ENCODE measurements at regions of chr14 and their contacts with region 1.

Region 1: GRCh38 chr14:59964251-59965007 is 44.5 kb downstream of the LRRC9 start:
- DNase-seq: no peak
- H3K4me3 Mint-ChIP-seq: peak overlapping the region; percentile 74
- H3K27ac Mint-ChIP-seq: peak overlapping the region; percentile 87
- H3K4me1 Mint-ChIP-seq: peaks cover 12% of the 10 kb centered on the region
- H3K27me3 Mint-ChIP-seq: no peaks in the 10 kb centered on the region

Region 2: GRCh38 chr14:59981564-59981963 is 17.1 kb after region 1 on chr14:
- CTCF ChIA-PET with region 1: interaction called, 19 read pairs
- POLR2A ChIA-PET with region 1: no interaction called
- intact Hi-C with region 1: no loop called
- DNase-seq: no peak
- H3K4me3 Mint-ChIP-seq: no peak overlapping the region
- H3K27ac Mint-ChIP-seq: no peak overlapping the region
- H3K4me1 Mint-ChIP-seq: no peaks in the 10 kb centered on the region
- H3K27me3 Mint-ChIP-seq: no peaks in the 10 kb centered on the region

Region 3: GRCh38 chr14:60064491-60065072 is 100.2 kb after region 1 on chr14:
- CTCF ChIA-PET with region 1: interaction called, 12 read pairs
- POLR2A ChIA-PET with region 1: no interaction called
- intact Hi-C with region 1: no loop called
- DNase-seq: no peak
- H3K4me3 Mint-ChIP-seq: no peak overlapping the region
- H3K27ac Mint-ChIP-seq: no peak overlapping the region
- H3K4me1 Mint-ChIP-seq: no peaks in the 10 kb centered on the region
- H3K27me3 Mint-ChIP-seq: peaks cover 4% of the 10 kb centered on the region

Region 4: DNA sequence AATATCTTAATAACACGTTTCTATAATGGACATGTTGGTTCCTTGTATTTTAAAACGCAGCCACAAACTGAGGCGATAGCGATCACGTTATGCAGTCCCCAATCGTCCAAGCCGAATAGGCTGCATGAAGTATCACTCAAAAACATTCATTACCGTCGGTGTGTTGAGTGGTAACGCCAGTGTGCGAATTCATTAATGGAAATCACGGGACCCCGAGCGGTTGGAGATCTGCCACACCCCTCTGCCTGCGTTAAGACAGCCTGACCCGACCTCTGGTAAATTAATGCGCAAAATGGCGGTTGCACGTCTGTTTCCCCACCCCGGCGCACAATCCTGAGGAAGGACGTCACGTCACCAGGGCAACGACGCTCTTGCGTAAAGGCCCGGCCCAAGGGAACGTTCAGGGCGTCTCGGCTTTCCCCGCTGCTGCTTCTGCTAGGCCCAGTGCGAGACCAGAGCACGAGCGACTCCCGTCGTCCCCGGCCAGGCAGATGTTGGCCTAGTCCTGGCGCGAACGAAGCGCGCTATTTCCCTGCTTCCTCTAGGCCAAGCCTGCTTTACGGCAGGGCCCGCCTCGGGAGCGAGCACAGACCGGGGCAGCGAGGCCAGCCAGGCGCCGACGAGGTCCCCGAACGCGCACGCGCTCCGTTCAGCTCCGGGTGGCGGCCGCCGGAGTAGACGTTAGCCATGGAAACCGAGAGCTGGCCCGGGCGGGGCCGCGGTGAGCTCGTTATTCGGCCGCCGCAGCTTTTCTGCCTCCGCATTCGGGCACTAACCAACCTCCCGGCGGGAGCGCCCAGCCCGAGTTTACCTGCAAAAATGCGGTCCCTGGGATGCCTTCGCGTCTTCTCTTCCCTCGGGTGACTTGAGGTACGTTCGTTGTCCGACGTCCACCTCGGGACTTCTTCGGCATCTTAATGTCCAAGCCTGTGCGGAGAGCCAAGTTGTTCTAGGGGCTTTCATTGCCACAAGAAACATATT is 127.4 kb after region 1 on chr14 and contains the start of gene PCNX4:
- CTCF ChIA-PET with region 1: interaction called, 9 read pairs
- POLR2A ChIA-PET with region 1: no interaction called
- intact Hi-C with region 1: loop called (anchors 1 kb)
- DNase-seq: peak; percentile 95
- H3K4me3 Mint-ChIP-seq: peak within 1 kb of the TSS; percentile 95
- H3K27ac Mint-ChIP-seq: peak within 1 kb of the TSS; percentile 91
- H3K4me1 Mint-ChIP-seq: peaks cover 30% of the 10 kb centered on the region
- H3K27me3 Mint-ChIP-seq: no peaks in the 10 kb centered on the region
- total RNA-seq, gene PCNX4: 26.3 to 26.9 TPM

Region 5: GRCh38 chr14:60164712-60165546 is 200.5 kb after region 1 on chr14 and contains the start of gene DHRS7:
- CTCF ChIA-PET with region 1: interaction called, 22 read pairs
- POLR2A ChIA-PET with region 1: no interaction called
- intact Hi-C with region 1: loop called (anchors 1 kb)
- DNase-seq: peak; percentile 79
- H3K4me3 Mint-ChIP-seq: peak within 1 kb of the TSS; percentile 94
- H3K27ac Mint-ChIP-seq: peak within 1 kb of the TSS; percentile 97
- H3K4me1 Mint-ChIP-seq: peaks cover 37% of the 10 kb centered on the region
- H3K27me3 Mint-ChIP-seq: no peaks in the 10 kb centered on the region
- total RNA-seq, gene DHRS7: 70.3 to 74.7 TPM

Region 6: GRCh38 chr14:61247935-61248334 is 1283.5 kb after region 1 on chr14:
- CTCF ChIA-PET with region 1: no interaction called
- POLR2A ChIA-PET with region 1: no interaction called
- intact Hi-C with region 1: no loop called
- DNase-seq: no peak
- H3K4me3 Mint-ChIP-seq: no peak overlapping the region
- H3K27ac Mint-ChIP-seq: no peak overlapping the region
- H3K4me1 Mint-ChIP-seq: peaks cover 8% of the 10 kb centered on the region
- H3K27me3 Mint-ChIP-seq: peaks cover 8% of the 10 kb centered on the region

Measured in activated CD4-positive, alpha-beta memory T cell treated with anti-CD3 and anti-CD28 coated beads for 36 hours (primary cell).